Activated CD4-positive, alpha-beta memory T cell treated with anti-CD3 and anti-CD28 coated beads, Interleukin-2, amount 10 ng/mL, durations not matched to agents 7 days and 5 days (primary cell): ENCODE measurements at regions of chr4 and their contacts with region 1.

Region 1: DNA sequence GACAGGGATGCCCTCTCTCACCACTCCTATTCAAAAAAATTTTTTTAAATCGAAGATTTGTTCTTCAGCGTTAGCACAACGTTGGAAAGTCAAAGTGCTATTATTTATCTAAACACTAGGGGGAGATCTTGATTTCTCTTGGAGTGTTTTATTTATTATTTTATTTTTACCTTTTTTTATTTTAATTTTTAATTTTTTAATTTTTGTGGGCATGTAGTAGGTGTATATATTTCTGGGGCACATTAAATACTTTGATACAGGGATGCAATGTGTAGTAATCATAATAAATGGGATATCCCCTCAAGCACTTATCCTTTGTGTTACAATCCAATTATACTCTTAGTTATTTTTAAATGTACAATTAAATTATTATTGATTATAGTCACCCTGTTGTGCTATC is 37.4 kb upstream of the SLC10A4 start:
- DNase-seq: no peak
- H3K4me3 Mint-ChIP-seq: no peak overlapping the region
- H3K27ac Mint-ChIP-seq: no peak overlapping the region
- H3K4me1 Mint-ChIP-seq: no peaks in the 10 kb centered on the region
- H3K27me3 Mint-ChIP-seq: peaks cover 3% of the 10 kb centered on the region

Region 2: DNA sequence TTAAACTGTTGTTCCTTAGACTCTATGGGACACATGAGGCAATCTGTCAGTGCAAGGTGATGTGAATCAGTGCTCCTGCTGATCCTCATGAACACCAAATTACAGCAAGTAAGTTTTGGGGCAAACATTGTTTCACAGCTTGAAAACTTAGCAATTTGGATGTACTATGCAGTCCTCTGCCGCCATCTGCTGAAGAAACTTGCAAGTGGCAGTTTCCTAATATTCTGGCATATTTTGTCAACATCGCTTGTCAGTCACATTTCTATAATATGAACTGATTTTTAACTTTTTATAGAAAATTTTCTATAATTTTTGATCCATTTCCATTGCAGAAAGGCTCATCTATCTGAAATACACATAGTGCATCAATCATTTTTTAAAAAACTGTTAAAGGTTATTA is 100.6 kb after region 1 on chr4:
- CTCF ChIA-PET with region 1: interaction called, 15 read pairs
- POLR2A ChIA-PET with region 1: no interaction called
- DNase-seq: peak; percentile 42
- H3K4me3 Mint-ChIP-seq: no peak overlapping the region
- H3K27ac Mint-ChIP-seq: no peak overlapping the region
- H3K4me1 Mint-ChIP-seq: no peaks in the 10 kb centered on the region
- H3K27me3 Mint-ChIP-seq: no peaks in the 10 kb centered on the region

Region 3: DNA sequence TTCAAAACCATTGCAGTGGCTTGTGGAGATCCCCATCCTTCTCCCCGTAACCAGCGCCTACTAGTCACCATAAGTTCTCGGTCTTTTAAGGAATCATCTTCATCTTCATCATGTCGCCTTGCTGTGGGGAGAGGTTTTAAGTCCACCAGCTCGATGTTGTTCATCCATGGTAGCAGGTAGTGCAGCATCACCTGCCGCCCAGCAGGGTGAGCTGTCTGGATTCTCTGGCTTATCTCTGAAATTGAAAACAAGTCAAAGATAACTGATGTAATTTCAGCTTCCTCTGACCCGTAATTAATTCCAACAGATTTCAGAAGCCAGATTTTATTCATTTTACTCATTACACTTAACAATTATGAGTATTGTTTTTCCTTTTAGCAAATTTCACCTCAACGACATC is 111.8 kb after region 1 on chr4:
- CTCF ChIA-PET with region 1: no interaction called
- POLR2A ChIA-PET with region 1: no interaction called
- DNase-seq: no peak
- H3K4me3 Mint-ChIP-seq: no peak overlapping the region
- H3K27ac Mint-ChIP-seq: no peak overlapping the region
- H3K4me1 Mint-ChIP-seq: peaks cover 4% of the 10 kb centered on the region
- H3K27me3 Mint-ChIP-seq: no peaks in the 10 kb centered on the region